OCI-LY7 (cell line): ENCODE measurements at regions of chr3 and their contacts with region 1.

Region 1: GRCh38 chr3:5006755-5007202 is 27.5 kb downstream of the BHLHE40 start:
- DNase-seq: peak; percentile 19
- H3K4me3 ChIP-seq: no peak overlapping the region
- H3K27ac ChIP-seq: no peak overlapping the region
- H3K4me1 ChIP-seq: peaks cover 42% of the 10 kb centered on the region
- CTCF ChIP-seq: no peak

Region 2: DNA sequence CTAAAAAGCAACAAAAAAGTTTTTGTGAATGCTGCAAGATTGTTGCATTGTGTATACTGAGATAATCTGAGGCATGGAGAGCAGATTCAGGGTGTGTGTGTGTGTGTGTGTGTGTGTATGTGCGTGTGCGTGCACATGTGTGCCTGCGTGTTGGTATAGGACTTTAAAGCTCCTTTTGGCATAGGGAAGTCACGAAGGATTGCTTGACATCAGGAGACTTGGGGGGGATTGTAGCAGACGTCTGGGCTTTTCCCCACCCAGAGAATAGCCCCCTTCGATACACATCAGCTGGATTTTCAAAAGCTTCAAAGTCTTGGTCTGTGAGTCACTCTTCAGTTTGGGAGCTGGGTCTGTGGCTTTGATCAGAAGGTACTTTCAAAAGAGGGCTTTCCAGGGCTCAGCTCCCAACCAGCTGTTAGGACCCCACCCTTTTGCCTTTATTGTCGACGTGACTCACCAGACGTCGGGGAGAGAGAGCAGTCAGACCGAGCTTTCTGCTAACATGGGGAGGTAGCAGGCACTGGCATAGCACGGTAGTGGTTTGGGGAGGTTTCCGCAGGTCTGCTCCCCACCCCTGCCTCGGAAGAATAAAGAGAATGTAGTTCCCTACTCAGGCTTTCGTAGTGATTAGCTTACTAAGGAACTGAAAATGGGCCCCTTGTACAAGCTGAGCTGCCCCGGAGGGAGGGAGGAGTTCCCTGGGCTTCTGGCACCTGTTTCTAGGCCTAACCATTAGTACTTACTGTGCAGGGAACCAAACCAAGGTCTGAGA is 22.9 kb before region 1 on chr3:
- CTCF ChIA-PET with region 1: interaction called, 5 read pairs
- POLR2A ChIA-PET with region 1: interaction called, 3 read pairs
- intact Hi-C with region 1: loop called (anchors 2 kb)
- DNase-seq: peak; percentile 62
- H3K4me3 ChIP-seq: no peak overlapping the region
- H3K27ac ChIP-seq: no peak overlapping the region
- H3K4me1 ChIP-seq: peaks cover 20% of the 10 kb centered on the region
- CTCF ChIP-seq: no peak

Region 3: GRCh38 chr3:5022966-5023776 is 16.4 kb after region 1 on chr3:
- CTCF ChIA-PET with region 1: no interaction called
- POLR2A ChIA-PET with region 1: interaction called, 16 read pairs
- intact Hi-C with region 1: no loop called
- DNase-seq: no peak
- H3K4me3 ChIP-seq: no peak overlapping the region
- H3K27ac ChIP-seq: no peak overlapping the region
- H3K4me1 ChIP-seq: no peaks in the 10 kb centered on the region
- CTCF ChIP-seq: no peak

Region 4: DNA sequence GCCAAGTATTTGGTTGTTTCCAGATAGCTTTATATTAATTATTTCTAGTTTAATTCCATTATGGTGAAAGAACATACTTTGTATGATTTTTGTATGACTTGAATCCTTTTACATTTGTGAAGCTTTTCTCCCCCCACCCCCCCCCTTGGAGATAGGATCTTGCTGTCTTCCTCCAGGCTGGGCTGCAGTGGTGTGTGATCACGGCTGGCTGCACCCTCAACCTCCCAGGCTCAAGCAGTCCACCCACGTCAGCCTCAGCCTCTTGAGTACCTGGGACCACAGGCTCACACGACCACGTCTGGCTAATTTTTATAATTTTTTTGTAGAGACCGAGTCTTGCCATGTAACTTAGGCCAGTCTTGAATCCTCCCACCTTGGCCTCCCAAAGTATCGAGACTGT is 144.8 kb after region 1 on chr3:
- CTCF ChIA-PET with region 1: no interaction called
- POLR2A ChIA-PET with region 1: no interaction called
- intact Hi-C with region 1: no loop called
- DNase-seq: no peak
- H3K4me3 ChIP-seq: no peak overlapping the region
- H3K27ac ChIP-seq: no peak overlapping the region
- H3K4me1 ChIP-seq: peaks cover 8% of the 10 kb centered on the region
- CTCF ChIP-seq: no peak